ENCODE measurements at regions of chr1 and their contacts with region 1.

Region 1: DNA sequence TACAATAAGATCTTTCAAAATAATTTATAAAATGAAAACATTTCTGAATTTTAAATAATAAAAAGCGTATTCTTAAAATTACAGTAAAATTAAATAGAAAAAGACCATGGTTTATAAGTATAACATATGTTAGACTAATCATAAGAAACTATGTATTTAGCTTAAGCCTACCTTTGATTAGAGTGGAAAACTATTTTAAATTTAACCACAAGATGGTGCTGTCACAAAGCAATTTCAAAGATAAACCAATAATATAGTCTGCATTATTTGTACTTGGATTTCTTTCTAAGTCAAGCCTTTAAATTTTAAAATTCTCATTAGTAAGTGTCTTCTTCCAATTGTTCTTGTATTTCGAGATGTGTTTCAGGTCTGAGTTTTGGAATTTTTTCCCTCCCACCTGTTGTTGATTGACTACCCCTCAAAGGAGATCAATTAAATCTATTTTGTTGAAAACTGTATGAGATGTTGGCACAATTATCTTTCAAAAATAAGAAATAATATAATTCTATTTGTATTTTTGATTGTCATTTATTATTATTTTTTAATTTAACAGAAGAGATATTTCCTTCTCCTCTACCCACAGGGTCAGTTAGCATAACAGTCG is 459.8 kb downstream of the KCNT2 start:
- DNase-seq: peak in 3 of 4 experiments; percentile 13 to 37 (median 23)
- ATAC-seq: peak; percentile 68
- H3K4me3 ChIP-seq: no peak overlapping the region
- H3K27ac ChIP-seq: no peak overlapping the region
- H3K4me1 ChIP-seq: no peaks in the 10 kb centered on the region; a peak in 1 of 5 replicates
- H3K27me3 ChIP-seq: no peaks in the 10 kb centered on the region
- CTCF ChIP-seq: peak; percentile 21 to 65 (median 27); a peak in 3 of 6 replicates
- EP300 ChIP-seq: no peak
- POLR2A ChIP-seq: no peak
- RAD21 ChIP-seq: peak; percentile 75 to 87

Region 2: DNA sequence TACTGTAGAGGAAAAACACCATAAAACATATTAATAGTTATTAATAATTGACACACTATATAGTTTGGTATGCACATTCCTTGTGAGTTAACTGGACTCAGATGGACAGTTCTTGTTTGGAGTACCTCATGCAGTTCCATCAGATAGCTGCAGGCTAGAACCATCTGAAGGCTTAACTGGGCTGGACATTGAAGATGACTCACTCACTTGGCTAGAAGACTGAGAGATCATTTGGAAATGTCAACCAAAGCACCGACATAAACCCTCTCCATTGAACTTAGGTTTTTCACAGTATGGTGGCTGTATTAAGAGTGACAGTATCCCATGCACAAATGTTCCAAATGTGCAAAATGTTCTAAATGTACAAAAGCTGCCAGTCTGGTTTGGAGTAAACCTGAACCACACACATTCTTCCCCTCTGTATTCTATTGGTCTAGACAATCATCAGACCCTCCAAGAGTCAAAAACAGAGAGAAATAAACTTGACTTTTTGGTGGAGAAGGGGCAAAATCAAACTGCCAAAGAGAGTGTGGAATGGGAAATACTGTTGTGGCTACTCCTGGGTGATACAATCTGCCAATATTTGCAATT is 248.6 kb before region 1 on chr1:
- CTCF ChIA-PET with region 1: no interaction called
- POLR2A ChIA-PET with region 1: no interaction called
- in situ Hi-C with region 1: no loop called
- intact Hi-C with region 1: loop called (anchors 2 kb)
- DNase-seq: peak; percentile 49 to 90 (median 62)
- ATAC-seq: peak; percentile 90
- H3K4me3 ChIP-seq: no peak overlapping the region
- H3K27ac ChIP-seq: peak overlapping the region; percentile 65
- H3K4me1 ChIP-seq: peaks cover 0 to 30% of the 10 kb centered on the region in 2 experiments; a peak in 2 of 5 replicates
- H3K27me3 ChIP-seq: no peaks in the 10 kb centered on the region
- CTCF ChIP-seq: no peak
- EP300 ChIP-seq: peak; percentile 80
- POLR2A ChIP-seq: no peak
- RAD21 ChIP-seq: no peak; a peak in 1 of 4 replicates

Region 3: GRCh38 chr1:195939844-195940243 is 208.6 kb before region 1 on chr1:
- CTCF ChIA-PET with region 1: interaction called, 3 read pairs
- POLR2A ChIA-PET with region 1: no interaction called
- in situ Hi-C with region 1: no loop called
- intact Hi-C with region 1: loop called (anchors 5 kb)
- DNase-seq: peak in 2 of 4 experiments; percentile 15 to 28
- ATAC-seq: peak; percentile 80
- H3K4me3 ChIP-seq: no peak overlapping the region
- H3K27ac ChIP-seq: no peak overlapping the region
- H3K4me1 ChIP-seq: no peaks in the 10 kb centered on the region
- H3K27me3 ChIP-seq: no peaks in the 10 kb centered on the region
- CTCF ChIP-seq: peak in 2 of 3 experiments; percentile 38 to 39; a peak in 4 of 6 replicates
- EP300 ChIP-seq: no peak
- POLR2A ChIP-seq: no peak
- RAD21 ChIP-seq: peak in 1 of 2 experiments; percentile 59; a peak in 2 of 4 replicates

Region 4: DNA sequence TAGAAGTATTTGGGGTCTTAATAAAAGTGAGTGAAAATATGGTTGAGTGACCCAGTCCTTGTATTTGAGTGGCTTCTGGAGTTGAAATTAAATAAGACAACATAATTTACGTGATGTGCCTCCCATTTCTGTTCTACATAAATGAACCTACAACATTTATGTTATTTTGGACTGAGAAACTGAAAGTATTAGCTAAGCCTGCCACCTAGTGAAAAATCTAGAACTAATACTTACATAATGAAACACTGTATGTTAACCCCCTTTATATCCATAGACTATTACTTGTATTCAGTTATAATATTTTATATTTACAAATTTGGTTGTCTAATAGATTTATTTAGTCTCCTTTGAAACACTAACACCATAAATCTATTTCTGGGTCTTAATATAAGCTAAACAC is 160.9 kb after region 1 on chr1:
- CTCF ChIA-PET with region 1: interaction called, 12 read pairs
- POLR2A ChIA-PET with region 1: no interaction called
- in situ Hi-C with region 1: loop called (anchors 10 kb)
- intact Hi-C with region 1: loop called (anchors 1 kb)
- DNase-seq: peak in 1 of 4 experiments; percentile 19
- ATAC-seq: peak; percentile 72
- H3K4me3 ChIP-seq: no peak overlapping the region
- H3K27ac ChIP-seq: no peak overlapping the region
- H3K4me1 ChIP-seq: no peaks in the 10 kb centered on the region
- H3K27me3 ChIP-seq: no peaks in the 10 kb centered on the region
- CTCF ChIP-seq: peak in 1 of 3 experiments; percentile 28; a peak in 2 of 6 replicates
- EP300 ChIP-seq: no peak
- POLR2A ChIP-seq: no peak
- RAD21 ChIP-seq: peak; percentile 65 to 75

Region 5: DNA sequence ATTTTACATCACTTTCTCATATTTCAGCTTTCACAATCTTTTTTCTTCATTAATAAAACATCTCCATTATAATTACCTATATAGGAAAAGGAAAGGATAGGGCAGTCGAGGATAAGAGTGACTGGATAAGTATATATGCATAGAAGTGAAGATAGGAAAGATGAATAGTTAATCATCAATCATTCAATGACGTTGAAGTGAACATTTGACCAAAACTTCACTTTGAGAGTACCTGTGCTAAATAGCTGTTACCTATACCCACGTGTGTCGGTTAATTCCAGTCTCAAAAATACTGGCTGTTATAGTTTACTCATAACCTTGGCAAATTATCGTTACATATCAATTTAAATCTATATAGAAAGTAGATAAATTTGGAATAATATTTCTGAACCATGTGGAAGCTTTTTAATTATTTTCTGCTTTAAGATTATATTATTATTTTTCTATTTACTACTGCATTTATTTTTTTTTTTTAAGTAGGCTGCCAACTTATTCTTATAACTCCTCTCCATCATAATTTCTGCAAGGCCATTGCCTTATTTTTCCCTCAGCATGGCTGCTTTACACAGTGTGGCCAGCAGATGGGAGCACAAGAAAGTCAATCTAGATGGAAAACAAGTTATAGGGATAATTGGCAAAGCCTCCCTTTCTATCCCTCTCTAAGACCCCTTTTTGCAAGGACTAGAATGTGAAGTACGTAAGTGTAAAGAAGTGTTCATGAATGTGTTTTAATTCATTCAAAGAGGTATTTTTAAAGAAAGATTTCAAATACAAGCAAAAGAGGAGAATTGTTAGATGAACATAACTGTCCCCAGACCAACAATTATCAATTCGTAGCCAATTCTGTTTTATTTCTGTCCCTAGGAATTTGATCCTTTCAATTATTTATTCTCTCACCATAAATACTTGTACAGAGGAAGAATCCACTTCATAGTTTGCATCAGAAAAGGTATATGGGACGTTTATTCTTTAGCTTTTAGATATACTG is 169.4 kb after region 1 on chr1:
- CTCF ChIA-PET with region 1: no interaction called
- POLR2A ChIA-PET with region 1: no interaction called
- in situ Hi-C with region 1: loop called (anchors 10 kb)
- intact Hi-C with region 1: no loop called
- DNase-seq: peak in 3 of 4 experiments; percentile 10 to 47 (median 13)
- ATAC-seq: peak; percentile 64; the same call in 2 of the 3 replicates
- H3K4me3 ChIP-seq: no peak overlapping the region
- H3K27ac ChIP-seq: no peak overlapping the region
- H3K4me1 ChIP-seq: no peaks in the 10 kb centered on the region
- H3K27me3 ChIP-seq: no peaks in the 10 kb centered on the region
- CTCF ChIP-seq: peak; percentile 41 to 54 (median 46); a peak in 4 of 6 replicates
- EP300 ChIP-seq: no peak
- POLR2A ChIP-seq: no peak
- RAD21 ChIP-seq: peak; percentile 70 to 78

Region 6: GRCh38 chr1:196660852-196661251 is 512.4 kb after region 1 on chr1:
- CTCF ChIA-PET with region 1: interaction called, 7 read pairs
- POLR2A ChIA-PET with region 1: no interaction called
- in situ Hi-C with region 1: loop called (anchors 10 kb)
- intact Hi-C with region 1: loop called (anchors 5 kb)
- DNase-seq: peak; percentile 47 to 49 (median 48)
- ATAC-seq: peak; percentile 82
- H3K4me3 ChIP-seq: no peak overlapping the region
- H3K27ac ChIP-seq: no peak overlapping the region
- H3K4me1 ChIP-seq: no peaks in the 10 kb centered on the region
- H3K27me3 ChIP-seq: no peaks in the 10 kb centered on the region
- CTCF ChIP-seq: peak in 2 of 3 experiments; percentile 52 to 69; a peak in 3 of 6 replicates
- EP300 ChIP-seq: no peak
- POLR2A ChIP-seq: no peak
- RAD21 ChIP-seq: peak; percentile 92 to 93

Region 7: GRCh38 chr1:197180252-197180878 is 1031.9 kb after region 1 on chr1:
- CTCF ChIA-PET with region 1: no interaction called
- POLR2A ChIA-PET with region 1: no interaction called
- in situ Hi-C with region 1: no loop called
- intact Hi-C with region 1: loop called (anchors 10 kb)
- DNase-seq: peak; percentile 27 to 56 (median 42)
- ATAC-seq: peak; percentile 88
- H3K4me3 ChIP-seq: no peak overlapping the region
- H3K27ac ChIP-seq: no peak overlapping the region
- H3K4me1 ChIP-seq: peaks cover 3 to 4% of the 10 kb centered on the region in 2 experiments; a peak in 2 of 5 replicates
- H3K27me3 ChIP-seq: no peaks in the 10 kb centered on the region
- CTCF ChIP-seq: peak; percentile 48 to 82 (median 63); a peak in 5 of 6 replicates
- EP300 ChIP-seq: no peak
- POLR2A ChIP-seq: no peak
- RAD21 ChIP-seq: peak; percentile 88 to 90